CD4-positive, alpha-beta memory T cell (primary cell): ENCODE measurements at regions of chr6 and their contacts with region 1.

Region 1: DNA sequence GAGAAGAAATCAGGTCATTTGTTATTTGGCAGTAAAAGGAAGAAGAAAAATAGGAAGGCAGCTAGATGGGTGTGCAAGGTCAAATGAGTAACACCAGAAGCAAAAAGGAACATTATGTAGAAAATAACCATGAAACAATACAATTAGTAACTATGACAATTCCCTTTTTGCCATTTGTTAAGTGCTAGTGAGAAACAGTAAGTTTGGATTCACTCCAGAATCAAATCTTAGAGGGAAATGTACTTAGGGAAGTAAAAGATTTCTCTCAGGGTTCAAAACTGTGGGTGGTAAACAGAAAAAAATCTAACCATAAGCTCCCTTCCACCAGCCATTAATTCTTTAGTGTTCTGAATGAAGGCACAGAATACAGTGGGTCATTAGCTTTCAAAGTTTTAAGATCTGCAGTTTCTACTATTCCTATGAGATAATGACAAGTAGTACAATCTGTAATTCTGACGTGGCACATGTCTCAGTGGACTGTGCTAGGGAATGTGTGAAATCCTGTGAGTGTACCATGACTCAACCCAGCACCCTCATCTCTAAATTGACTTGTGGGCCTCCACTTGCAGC is 17.1 kb downstream of the REPS1 start:
- DNase-seq: no peak
- H3K4me3 ChIP-seq: no peak overlapping the region
- H3K4me3 Mint-ChIP-seq: peak overlapping the region in 3 of 8 donors; percentile 6 to 57 (median 7)
- H3K27ac ChIP-seq: no peak overlapping the region
- H3K27ac Mint-ChIP-seq: peak overlapping the region in 2 of 7 donors; percentile 2 to 11
- H3K4me1 ChIP-seq: peaks cover 74% of the 10 kb centered on the region
- H3K4me1 Mint-ChIP-seq: peaks cover 58 to 89% (median 75%) of the 10 kb centered on the region in 4 donors
- H3K27me3 ChIP-seq: no peaks in the 10 kb centered on the region
- H3K27me3 Mint-ChIP-seq: no peaks in the 10 kb centered on the region

Region 2: DNA sequence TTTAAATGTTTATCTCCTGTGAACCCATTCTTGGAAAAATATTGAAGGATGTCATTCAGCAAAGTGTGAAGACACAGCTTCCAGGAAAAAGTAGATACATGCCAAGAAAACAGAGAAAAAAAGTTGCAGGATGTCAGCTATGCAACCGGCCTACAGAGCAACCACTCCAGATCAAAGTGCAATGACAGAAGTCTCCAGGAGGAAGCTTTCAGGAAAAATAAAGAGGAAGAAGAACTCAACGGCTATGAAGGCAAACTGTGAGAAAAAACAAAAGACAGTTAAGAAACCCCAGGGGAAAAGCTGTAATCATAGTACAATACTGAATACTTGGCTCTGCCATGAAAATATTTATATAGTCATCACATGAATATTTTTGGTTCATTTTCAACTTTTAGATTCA is 13.5 kb before region 1 on chr6:
- CTCF ChIA-PET with region 1: interaction called, 4 read pairs
- POLR2A ChIA-PET with region 1: no interaction called
- intact Hi-C with region 1: loop called (anchors 2 kb)
- DNase-seq: no peak
- H3K4me3 ChIP-seq: no peak overlapping the region
- H3K4me3 Mint-ChIP-seq: peak overlapping the region in 4 of 8 donors; percentile 7 to 67 (median 42)
- H3K27ac ChIP-seq: no peak overlapping the region
- H3K27ac Mint-ChIP-seq: peak overlapping the region in 3 of 7 donors; percentile 14 to 68 (median 65)
- H3K4me1 ChIP-seq: peaks cover 43% of the 10 kb centered on the region
- H3K4me1 Mint-ChIP-seq: peaks cover 62 to 82% (median 69%) of the 10 kb centered on the region in 4 donors
- H3K27me3 ChIP-seq: no peaks in the 10 kb centered on the region
- H3K27me3 Mint-ChIP-seq: no peaks in the 10 kb centered on the region